ENCODE measurements at regions of chr7 and their contacts with region 1.

Region 1: DNA sequence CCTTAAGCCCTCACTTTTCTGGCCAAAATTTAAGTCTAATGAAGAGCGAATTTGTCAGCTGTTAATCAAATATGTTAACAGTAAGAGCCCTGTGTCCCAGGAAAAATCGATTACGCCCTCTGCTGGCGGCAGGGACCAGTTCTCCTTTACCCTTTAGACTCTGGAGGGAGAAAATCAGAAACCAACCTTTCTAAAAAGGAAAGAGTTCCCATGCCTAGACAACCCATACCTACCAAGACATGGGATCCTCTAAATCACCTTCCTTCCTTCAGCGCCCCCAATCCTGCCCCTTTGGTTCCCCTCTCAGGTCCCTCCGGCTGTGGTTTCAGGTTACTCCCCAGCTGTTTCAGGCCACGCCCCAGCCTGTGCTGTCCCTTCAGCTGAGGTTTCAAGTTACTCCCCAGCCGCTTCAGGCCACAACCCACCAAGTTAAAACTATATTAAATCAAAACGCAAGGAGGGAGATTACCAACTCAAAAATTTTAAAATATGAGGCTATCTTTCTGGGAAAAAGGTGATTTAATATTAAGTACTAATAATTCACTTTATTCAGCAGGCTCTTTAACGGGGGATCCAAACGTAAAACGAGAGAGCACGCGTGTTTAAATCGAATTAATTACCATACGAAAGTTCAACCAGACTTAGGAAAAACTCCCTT is 1.4 kb upstream of the AKR1B15 start:
- DNase-seq: no peak
- H3K4me3 ChIP-seq: peak overlapping the region; percentile 35
- H3K27me3 ChIP-seq: peaks cover 8% of the 10 kb centered on the region
- CTCF ChIP-seq: peak; percentile 89

Region 2: DNA sequence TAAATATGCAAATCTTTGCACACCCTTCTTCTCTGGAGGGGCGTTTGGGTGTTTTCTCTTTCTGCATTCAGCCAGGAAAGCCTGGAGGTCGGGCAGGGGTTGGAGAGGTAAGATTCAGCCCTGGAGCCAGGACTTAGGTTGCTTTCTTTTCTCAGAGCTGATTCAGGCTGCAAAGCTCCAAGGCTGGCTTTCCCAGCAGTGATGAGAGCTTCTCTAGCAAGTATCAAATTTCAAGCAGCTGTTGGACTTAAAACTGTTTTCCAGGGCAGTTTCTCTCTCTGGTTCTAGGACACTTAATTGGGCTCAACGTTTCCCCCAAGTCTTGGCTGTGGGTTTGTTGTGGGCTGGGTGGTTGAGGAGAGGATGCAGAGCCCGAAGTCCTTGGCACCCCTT is 19.6 kb before region 1 on chr7:
- CTCF ChIA-PET with region 1: interaction called, 34 read pairs
- POLR2A ChIA-PET with region 1: no interaction called
- DNase-seq: peak; percentile 13
- H3K4me3 ChIP-seq: no peak overlapping the region
- H3K27me3 ChIP-seq: peaks cover 1% of the 10 kb centered on the region
- CTCF ChIP-seq: no peak

Region 3: GRCh38 chr7:134533288-134533771 is 14.2 kb before region 1 on chr7:
- CTCF ChIA-PET with region 1: interaction called, 34 read pairs
- POLR2A ChIA-PET with region 1: no interaction called
- DNase-seq: no peak
- H3K4me3 ChIP-seq: no peak overlapping the region
- H3K27me3 ChIP-seq: peaks cover 1% of the 10 kb centered on the region
- CTCF ChIP-seq: no peak

Region 4: DNA sequence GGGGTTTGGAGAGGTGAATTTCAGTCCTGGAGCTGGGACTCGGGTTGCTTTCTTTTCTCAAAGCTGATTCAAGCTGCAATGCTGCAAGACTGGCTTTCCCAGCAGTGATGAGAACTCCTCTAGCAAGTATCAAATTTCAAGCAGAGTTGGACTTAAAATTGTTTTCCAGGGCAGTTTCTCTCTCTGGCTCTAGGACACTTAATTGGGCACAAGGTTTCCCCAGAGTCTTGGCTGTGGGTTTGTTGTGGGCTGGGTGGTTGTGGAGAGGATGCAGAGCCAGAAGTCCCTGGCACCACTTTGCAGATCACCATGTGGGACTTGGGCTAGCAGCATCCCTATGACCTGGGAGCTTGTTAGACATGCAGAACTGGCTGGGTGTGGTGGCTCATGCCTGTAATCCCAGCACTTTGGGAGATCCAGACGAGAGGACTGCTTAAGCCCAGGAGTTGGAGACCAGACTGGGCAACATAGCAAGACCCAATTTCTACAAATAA is 18.2 kb after region 1 on chr7:
- CTCF ChIA-PET with region 1: interaction called, 18 read pairs
- POLR2A ChIA-PET with region 1: no interaction called
- DNase-seq: no peak
- H3K4me3 ChIP-seq: no peak overlapping the region
- H3K27me3 ChIP-seq: no peaks in the 10 kb centered on the region; the same call in none of the 2 replicates
- CTCF ChIP-seq: no peak

Region 5: DNA sequence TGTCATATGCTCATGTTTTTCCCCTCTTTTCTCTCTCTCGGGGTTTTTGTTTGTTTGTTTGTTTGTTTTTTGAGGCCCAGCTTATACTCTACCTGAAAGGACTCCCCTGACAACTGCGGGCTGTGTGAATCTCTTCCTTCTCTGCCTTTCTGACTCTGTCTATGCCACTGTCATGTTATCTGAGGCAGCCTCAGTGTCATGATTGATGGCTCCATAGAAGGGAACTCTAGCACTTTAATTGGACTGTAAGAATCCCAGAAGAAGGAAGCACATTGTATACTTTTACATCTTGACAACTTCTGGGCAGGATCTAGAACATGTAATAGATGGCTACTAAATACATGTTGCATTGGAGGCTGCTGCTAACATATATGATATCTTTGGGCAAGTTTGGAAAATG is 26.8 kb after region 1 on chr7:
- CTCF ChIA-PET with region 1: interaction called, 10 read pairs
- POLR2A ChIA-PET with region 1: no interaction called
- DNase-seq: no peak
- H3K4me3 ChIP-seq: no peak overlapping the region
- H3K27me3 ChIP-seq: peaks cover 3% of the 10 kb centered on the region
- CTCF ChIP-seq: no peak

Region 6: DNA sequence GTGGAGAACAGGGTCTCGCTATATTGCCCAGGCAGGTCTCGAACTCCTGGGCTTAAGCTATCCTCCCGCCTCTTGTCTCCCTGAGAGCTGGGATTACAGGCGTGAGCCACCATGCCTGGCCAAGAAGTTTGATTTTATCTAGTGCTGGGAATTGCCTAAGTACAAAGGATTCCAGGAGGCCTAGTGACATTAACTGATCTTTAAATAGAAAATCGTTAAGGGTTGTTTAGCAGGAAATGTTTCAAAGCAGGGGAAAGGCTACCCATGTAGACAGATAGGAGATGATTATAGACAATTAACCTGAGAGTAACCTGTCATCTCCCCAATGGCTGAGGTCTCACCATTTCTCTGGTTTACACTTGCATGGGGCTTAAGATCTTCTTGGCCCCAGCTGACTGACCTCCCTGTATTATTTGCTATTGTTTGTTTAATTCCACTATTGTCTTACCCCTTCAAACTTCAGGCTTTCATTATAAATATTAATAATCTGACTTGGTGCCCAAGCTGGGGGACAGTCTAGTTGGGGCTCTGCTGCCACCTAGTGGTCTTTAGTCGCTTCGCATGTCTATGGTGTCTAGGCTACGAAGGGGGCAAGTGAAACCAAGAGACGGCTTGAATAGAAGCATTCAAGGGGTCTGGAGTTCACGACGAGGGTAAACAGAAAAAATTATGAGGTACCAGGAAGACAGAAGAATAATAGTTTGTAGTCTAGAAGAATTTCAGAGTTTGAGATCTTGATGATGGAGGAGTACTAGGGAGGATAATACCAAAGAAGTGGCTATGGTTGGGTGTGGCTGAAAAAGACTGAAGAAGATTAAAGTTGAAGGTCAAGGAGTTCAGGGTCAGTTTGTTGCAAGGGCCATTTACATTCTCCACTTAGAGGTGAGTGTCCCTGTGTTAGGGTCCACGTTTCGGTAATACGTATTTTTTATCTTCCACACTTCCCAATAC is 58.7 kb after region 1 on chr7:
- CTCF ChIA-PET with region 1: interaction called, 19 read pairs
- POLR2A ChIA-PET with region 1: no interaction called
- DNase-seq: no peak
- H3K4me3 ChIP-seq: no peak overlapping the region
- H3K27me3 ChIP-seq: no peaks in the 10 kb centered on the region
- CTCF ChIP-seq: peak; percentile 91